Activated naive CD4-positive, alpha-beta T cell treated with anti-CD3 and anti-CD28 coated beads for 36 hours (primary cell): ENCODE measurements at regions of chr22 and their contacts with region 1.

Region 1: DNA sequence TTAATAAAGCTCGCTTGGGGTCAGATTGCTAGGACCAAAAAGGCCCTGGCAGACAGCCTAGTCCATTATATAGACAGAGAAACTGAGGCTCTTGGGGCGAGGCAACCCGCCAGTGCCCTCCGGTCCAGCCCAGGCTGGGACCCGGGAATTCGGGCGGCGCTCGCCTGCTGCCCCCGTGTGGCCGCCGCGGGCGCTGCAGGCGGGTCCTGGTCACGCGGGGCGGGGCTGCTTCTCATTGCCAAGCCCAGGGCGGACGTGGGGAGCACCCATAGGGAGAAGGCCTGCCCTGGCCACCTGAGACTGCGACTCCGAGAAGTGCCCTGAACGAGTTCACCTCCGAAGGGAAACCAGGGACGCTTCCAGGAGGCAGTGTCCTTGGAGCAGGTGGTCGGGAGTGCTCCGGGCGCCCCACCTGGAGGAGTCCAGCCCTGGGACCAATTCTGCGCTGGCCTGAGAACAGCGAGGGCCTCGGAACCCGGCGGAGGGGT is 36.0 kb upstream of the CSNK1E start:
- DNase-seq: peak; percentile 65
- H3K4me3 Mint-ChIP-seq: no peak overlapping the region
- H3K27ac Mint-ChIP-seq: no peak overlapping the region
- H3K4me1 Mint-ChIP-seq: no peaks in the 10 kb centered on the region
- H3K27me3 Mint-ChIP-seq: no peaks in the 10 kb centered on the region

Region 2: DNA sequence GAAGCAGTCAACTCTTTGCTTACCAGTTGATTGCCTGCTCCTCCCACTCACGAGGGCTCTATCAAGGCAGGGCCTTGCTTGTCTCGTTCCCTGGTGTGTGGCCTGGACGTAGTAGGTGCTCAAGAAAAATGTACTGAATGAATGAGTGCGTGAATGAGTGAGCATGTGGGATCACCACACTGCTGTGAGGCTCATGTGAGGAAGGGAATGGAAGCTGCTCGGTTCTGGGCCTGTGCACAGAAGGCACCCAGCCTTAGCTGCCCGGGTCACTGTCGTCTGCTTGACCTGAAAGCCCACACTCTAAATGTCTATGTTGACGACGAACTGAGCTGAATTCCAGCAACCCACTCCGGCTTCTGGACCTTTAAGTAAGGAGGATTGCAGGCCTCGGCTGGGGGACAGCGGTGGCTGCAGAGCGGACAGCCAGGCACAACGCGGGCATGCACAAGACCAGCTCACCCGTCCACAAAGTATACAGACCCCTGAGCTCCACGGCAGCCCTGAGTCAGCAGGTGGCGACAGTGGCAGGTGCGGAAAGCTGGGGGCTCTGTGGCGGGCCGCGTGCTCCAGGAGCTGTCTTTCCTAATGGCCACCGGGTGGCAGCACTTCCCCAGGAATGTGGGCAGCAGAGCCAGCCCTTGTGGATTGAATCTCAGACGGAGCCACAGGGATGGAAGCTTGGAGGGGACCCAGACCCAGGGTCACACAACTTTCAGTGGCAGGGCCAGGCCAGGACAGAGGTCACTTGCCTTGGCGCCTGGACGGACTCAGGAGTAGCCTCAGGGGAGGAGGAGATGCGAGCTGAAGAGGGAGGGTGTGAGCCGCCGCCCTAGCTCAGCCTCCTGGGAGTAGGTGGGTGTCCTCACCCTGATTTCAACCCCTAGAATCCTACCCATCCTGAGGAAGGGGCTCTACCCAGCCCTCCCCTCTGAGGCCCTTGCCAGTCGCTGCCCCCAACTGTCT is 301.0 kb before region 1 on chr22:
- CTCF ChIA-PET with region 1: interaction called, 7 read pairs
- intact Hi-C with region 1: loop called (anchors 1 kb)
- DNase-seq: peak; percentile 83
- H3K4me3 Mint-ChIP-seq: no peak overlapping the region
- H3K27ac Mint-ChIP-seq: no peak overlapping the region
- H3K4me1 Mint-ChIP-seq: peaks cover 7% of the 10 kb centered on the region
- H3K27me3 Mint-ChIP-seq: no peaks in the 10 kb centered on the region

Region 3: DNA sequence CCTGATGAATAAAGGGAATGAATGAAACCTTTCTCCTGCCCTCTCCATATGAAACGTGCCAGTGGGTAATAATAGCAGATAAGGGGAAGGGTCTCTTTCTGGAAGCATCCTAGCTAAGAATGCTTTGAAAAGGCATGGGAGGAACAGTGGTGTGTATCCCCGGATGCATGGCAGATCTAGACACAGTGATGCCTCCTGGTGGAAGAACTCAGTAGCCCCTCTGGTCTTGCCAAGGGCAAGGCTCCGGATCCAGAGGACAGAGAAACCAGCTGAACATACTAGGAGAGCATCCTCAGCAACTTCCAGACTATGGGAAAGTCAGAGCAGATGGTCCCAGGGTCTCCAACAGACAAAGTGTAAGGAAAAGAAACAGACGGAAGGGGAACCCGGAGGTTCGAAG is 249.1 kb before region 1 on chr22:
- CTCF ChIA-PET with region 1: no interaction called
- intact Hi-C with region 1: loop called (anchors 5 kb)
- DNase-seq: no peak
- H3K4me3 Mint-ChIP-seq: no peak overlapping the region
- H3K27ac Mint-ChIP-seq: no peak overlapping the region
- H3K4me1 Mint-ChIP-seq: no peaks in the 10 kb centered on the region
- H3K27me3 Mint-ChIP-seq: no peaks in the 10 kb centered on the region

Region 4: GRCh38 chr22:38262051-38262795 is 91.0 kb before region 1 on chr22:
- CTCF ChIA-PET with region 1: interaction called, 5 read pairs
- intact Hi-C with region 1: loop called (anchors 1 kb)
- DNase-seq: peak; percentile 60
- H3K4me3 Mint-ChIP-seq: no peak overlapping the region
- H3K27ac Mint-ChIP-seq: no peak overlapping the region
- H3K4me1 Mint-ChIP-seq: peaks cover 32% of the 10 kb centered on the region
- H3K27me3 Mint-ChIP-seq: no peaks in the 10 kb centered on the region

Region 5: GRCh38 chr22:38298312-38299000 is 54.7 kb before region 1 on chr22:
- CTCF ChIA-PET with region 1: no interaction called
- intact Hi-C with region 1: loop called (anchors 5 kb)
- DNase-seq: peak; percentile 44
- H3K4me3 Mint-ChIP-seq: no peak overlapping the region
- H3K27ac Mint-ChIP-seq: no peak overlapping the region
- H3K4me1 Mint-ChIP-seq: no peaks in the 10 kb centered on the region
- H3K27me3 Mint-ChIP-seq: no peaks in the 10 kb centered on the region